Gastrocnemius medialis (tissue), 4 donors: ENCODE measurements at regions of chr6 and their contacts with region 1.

Region 1: DNA sequence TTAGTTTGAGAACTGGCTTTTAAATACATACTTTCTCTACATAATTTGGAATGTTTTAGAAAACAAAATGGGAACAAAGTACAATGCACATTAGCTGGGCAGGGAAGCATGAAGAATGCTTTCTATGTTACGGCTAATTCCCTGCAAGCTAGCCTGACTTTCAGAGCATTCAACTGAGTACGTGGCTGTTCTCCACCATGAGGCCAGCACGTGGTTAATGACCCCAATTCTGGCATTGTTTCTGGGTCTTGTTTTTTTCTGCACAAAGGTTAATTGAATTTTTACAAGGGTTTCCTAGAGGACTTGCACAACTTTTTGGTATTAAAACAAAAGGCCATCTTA is 208.6 kb upstream of the AGPAT4 start:
- DNase-seq: no peak
- ATAC-seq: no peak
- H3K4me3 ChIP-seq: no peak overlapping the region
- H3K27ac ChIP-seq: peak overlapping the region; percentile 27 to 49 (median 42)
- H3K4me1 ChIP-seq: peaks cover 26 to 30% of the 10 kb centered on the region in 2 donors
- H3K27me3 ChIP-seq: no peaks in the 10 kb centered on the region
- CTCF ChIP-seq: no peak
- POLR2A ChIP-seq: no peak

Region 2: GRCh38 chr6:161439093-161439492 is 43.4 kb before region 1 on chr6:
- in situ Hi-C with region 1: no loop called
- intact Hi-C with region 1: loop called (anchors 5 kb)
- DNase-seq: peak; percentile 79 to 83
- ATAC-seq: peak; percentile 81 to 87
- H3K4me3 ChIP-seq: peak overlapping the region; percentile 17 to 37 (median 26)
- H3K27ac ChIP-seq: peak overlapping the region; percentile 69 to 86 (median 76)
- H3K4me1 ChIP-seq: peaks cover 17 to 26% of the 10 kb centered on the region in 2 donors
- H3K27me3 ChIP-seq: no peaks in the 10 kb centered on the region
- CTCF ChIP-seq: no peak
- POLR2A ChIP-seq: peak in 1 of 2 donors; percentile 7

Region 3: DNA sequence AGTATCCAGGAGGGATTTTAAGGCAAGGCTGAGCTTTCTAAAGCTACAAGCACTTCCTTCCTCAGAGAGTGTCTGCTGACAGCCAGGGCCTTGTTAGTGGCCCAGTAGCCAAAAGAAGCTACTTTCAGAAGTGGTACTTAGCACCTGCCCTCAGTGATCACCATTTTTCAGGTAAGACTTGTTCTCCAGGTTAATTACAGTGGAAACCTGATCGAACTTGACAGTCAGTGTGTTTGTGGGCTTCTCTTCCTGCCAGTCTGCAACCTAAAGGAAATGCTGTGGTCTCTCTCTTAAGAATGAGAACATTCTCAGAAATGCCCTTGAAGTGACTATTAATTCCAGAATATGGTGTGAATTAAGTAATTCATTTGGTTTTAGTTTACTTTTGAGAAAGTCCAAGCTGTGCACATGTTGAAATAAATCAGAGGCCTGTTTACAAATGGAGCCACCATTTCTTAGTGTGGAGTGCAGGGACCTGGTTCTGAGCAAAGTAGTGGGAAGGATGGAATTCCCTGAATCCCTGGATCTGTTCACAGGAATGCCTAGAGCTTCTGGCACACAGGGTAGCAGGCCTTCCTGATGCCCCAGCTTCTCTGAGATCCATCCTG is 23.4 kb before region 1 on chr6:
- in situ Hi-C with region 1: no loop called
- intact Hi-C with region 1: no loop called
- DNase-seq: no peak
- ATAC-seq: no peak
- H3K4me3 ChIP-seq: no peak overlapping the region
- H3K27ac ChIP-seq: no peak overlapping the region
- H3K4me1 ChIP-seq: no peaks in the 10 kb centered on the region
- H3K27me3 ChIP-seq: no peaks in the 10 kb centered on the region
- CTCF ChIP-seq: no peak
- POLR2A ChIP-seq: no peak